Gastrocnemius medialis (tissue), 4 donors: ENCODE measurements at regions of chr18 and their contacts with region 1.

Region 1: DNA sequence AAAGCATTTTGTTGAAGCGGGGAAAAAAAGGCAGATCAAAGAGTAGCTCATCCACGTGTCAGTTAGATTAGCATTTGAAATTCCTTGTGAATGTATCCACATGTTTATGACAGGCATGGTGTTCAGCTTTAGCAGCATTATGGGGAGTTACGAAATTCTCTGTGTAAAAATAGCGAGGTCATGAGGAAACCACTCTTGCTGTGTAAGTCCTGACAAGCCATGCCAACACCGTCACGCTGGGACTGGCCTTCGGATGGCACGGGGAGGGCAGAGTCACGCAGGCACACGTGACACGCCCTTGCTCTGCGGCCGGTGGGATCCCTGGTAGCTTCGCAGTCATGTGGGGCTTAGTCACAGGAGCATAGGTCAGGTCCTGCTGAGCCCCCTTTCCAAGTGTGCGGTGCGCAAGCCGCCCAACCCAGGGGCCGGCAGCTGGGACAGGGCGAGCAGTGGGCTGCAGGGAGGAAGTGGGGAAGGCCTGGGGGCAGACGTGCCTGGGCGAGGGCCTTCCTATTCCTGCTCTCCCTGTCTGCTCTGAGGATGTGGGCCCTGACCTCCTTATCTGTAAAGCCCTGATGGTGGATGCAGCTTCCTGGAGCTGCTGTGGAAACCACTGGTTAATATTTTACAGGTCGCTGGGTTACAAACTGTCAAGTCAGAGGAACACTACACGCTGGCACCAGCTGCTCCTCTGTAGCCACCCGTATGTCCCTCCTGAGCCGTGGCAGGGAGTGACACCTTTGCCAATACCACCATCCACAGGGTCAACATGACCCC is 18.0 kb downstream of the MBP start:
- DNase-seq: peak; percentile 99
- ATAC-seq: peak; percentile 95 to 96
- H3K4me3 ChIP-seq: peak overlapping the region; percentile 4 to 46 (median 44)
- H3K27ac ChIP-seq: peak overlapping the region; percentile 88 to 100 (median 98)
- H3K4me1 ChIP-seq: peaks cover 27 to 48% of the 10 kb centered on the region in 2 donors
- H3K27me3 ChIP-seq: no peaks in the 10 kb centered on the region
- CTCF ChIP-seq: peak in 1 of 5 experiments; percentile 53
- POLR2A ChIP-seq: peak; percentile 76 to 87

Region 2: DNA sequence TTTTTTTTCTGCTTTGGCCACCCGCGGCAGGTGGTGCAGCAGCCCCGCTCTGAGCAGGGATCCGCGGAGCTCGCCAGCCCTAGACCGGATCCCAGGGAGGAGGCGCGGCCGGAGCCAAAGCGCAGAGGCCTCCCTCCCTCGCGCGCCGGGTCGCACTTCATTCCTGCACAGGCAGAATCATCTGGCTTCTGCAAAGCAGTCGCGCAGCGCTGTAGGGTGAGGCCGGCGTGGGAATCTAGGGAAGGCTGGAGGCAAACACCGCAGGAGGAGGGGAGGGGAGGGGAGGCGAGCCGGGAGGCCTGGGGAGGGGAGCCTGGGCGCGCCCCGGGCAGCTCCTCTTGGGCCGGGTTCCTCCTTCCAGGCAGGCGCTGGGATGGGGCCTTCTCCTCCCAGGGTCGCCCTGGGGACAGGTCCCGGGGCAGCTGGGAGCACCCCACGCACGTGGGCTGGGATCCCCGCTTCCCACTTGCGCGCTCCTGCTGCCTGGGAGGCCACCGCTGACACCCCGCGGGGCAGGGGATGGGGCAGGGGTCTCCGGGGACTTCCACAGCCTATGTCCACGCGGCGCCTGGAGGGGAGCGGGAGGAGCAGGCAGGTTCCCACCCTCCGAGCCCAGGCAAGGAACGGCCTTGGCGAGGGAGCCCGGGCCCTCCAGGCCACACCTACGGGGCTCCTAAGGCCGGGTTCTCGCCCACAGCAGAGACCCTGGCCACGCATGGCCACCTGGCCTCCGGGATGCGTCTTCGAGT is 27.0 kb before region 1 on chr18:
- in situ Hi-C with region 1: no loop called
- intact Hi-C with region 1: loop called (anchors 1 kb)
- DNase-seq: no peak
- ATAC-seq: peak; percentile 13 to 16
- H3K4me3 ChIP-seq: peak overlapping the region; percentile 48 to 56 (median 50)
- H3K27ac ChIP-seq: peak overlapping the region; percentile 88 to 97 (median 94)
- H3K4me1 ChIP-seq: peaks cover 72 to 89% of the 10 kb centered on the region in 2 donors
- H3K27me3 ChIP-seq: no peaks in the 10 kb centered on the region
- CTCF ChIP-seq: no peak
- POLR2A ChIP-seq: no peak

Region 3: GRCh38 chr18:77101410-77102258 is 13.0 kb before region 1 on chr18:
- in situ Hi-C with region 1: no loop called
- intact Hi-C with region 1: loop called (anchors 1 kb)
- DNase-seq: peak; percentile 89 to 95
- ATAC-seq: peak; percentile 88 to 90
- H3K4me3 ChIP-seq: peak overlapping the region in 2 of 4 donors; percentile 3 to 34
- H3K27ac ChIP-seq: peak overlapping the region; percentile 85 to 100 (median 86)
- H3K4me1 ChIP-seq: peaks cover 61 to 63% of the 10 kb centered on the region in 2 donors
- H3K27me3 ChIP-seq: no peaks in the 10 kb centered on the region
- CTCF ChIP-seq: no peak
- POLR2A ChIP-seq: peak; percentile 41 to 65

Region 4: DNA sequence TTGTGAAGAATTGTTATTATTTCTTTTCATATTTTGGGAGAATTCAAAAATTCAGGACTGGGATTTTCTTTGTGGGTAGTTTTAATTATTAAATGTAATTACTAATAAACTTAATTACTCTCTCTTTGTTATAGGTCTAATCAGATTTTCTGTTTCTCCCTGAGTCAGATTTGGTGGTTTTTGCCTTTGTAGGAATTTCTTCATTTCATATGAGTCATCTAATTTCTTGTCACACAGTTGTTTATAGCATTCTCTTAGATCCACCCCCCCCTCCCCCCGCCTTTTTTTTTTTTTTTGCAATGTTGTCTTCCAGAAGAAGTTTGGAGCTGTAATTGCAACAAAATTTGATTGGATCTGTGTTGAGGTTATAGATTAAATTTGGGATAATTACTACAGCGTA is 109.0 kb after region 1 on chr18:
- in situ Hi-C with region 1: no loop called
- intact Hi-C with region 1: no loop called
- DNase-seq: no peak
- ATAC-seq: peak in 1 of 2 donors; percentile 19
- H3K4me3 ChIP-seq: no peak overlapping the region
- H3K27ac ChIP-seq: no peak overlapping the region
- H3K4me1 ChIP-seq: no peaks in the 10 kb centered on the region
- H3K27me3 ChIP-seq: peaks cover 0 to 2% (median 0%) of the 10 kb centered on the region in 3 donors
- CTCF ChIP-seq: no peak
- POLR2A ChIP-seq: no peak

Region 5: DNA sequence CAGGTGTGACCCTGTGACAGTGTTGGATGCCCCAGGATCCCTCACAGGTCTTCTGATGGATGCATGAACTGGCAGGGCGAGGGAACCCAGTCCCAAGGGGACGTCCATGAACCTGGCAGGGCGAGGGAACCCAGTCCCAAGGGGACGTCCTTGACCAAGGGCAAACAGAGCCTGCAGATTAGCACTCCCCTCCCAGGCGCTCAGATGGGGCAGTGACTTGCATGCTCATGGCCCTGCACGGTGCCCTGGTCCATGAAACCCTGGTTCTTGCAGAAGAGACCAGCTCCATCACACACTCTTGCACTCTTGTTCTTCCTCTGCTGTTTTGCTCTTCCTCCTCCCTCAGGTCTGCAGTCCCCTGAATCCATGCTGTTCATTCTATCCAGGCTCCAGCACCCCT is 327.8 kb after region 1 on chr18:
- in situ Hi-C with region 1: no loop called
- intact Hi-C with region 1: no loop called
- DNase-seq: no peak
- ATAC-seq: no peak
- H3K4me3 ChIP-seq: no peak overlapping the region
- H3K27ac ChIP-seq: no peak overlapping the region
- H3K4me1 ChIP-seq: no peaks in the 10 kb centered on the region
- H3K27me3 ChIP-seq: no peaks in the 10 kb centered on the region
- CTCF ChIP-seq: no peak
- POLR2A ChIP-seq: no peak